Ovary (tissue), 10 donors: ENCODE measurements at regions of chr21 and their contacts with region 1.

Region 1: DNA sequence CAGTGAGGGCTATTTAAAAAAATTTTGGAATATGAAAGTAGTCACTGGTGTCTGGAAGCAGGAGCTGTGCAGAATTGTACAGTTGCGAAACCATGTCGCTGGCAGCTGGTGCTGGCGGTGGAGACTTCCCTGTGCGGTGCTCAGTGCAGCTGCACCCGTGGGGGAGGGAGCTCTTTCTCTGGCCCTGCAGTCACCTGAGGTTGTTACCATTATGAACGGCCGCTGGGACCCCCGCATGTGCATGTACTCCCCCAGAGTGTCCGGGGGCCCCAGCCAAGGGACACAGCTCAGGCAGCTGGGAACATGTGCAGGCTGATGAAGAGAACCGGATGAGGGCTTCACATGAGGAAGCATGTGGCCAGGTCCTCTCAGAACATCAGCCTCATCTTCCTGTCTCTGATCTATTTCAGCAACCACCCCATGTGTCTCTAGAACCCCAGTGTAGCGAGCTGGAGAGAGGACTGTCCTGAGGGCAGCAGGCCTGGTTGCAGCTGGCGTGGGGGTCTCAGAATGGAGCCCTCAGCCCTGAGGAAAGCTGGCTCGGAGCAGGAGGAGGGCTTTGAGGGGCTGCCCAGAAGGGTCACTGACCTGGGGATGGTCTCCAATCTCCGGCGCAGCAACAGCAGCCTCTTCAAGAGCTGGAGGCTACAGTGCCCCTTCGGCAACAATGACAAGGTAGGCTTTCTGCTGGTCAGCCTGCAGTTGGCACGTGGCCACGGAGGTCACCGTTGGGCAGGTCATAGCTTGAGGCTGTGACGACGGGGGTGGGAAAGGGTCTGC is at the start of gene TRPM2:
- DNase-seq: no peak
- H3K4me3 ChIP-seq: no peak within 1 kb of the TSS
- H3K27ac ChIP-seq: no peak within 1 kb of the TSS
- H3K4me1 ChIP-seq: no peaks in the 10 kb centered on the region
- H3K27me3 ChIP-seq: no peaks in the 10 kb centered on the region
- CTCF ChIP-seq: no peak
- EP300 ChIP-seq: no peak
- POLR2A ChIP-seq: no peak
- total RNA-seq, gene TRPM2: 0.48 to 7.0 (median 2.1) TPM

Region 2: DNA sequence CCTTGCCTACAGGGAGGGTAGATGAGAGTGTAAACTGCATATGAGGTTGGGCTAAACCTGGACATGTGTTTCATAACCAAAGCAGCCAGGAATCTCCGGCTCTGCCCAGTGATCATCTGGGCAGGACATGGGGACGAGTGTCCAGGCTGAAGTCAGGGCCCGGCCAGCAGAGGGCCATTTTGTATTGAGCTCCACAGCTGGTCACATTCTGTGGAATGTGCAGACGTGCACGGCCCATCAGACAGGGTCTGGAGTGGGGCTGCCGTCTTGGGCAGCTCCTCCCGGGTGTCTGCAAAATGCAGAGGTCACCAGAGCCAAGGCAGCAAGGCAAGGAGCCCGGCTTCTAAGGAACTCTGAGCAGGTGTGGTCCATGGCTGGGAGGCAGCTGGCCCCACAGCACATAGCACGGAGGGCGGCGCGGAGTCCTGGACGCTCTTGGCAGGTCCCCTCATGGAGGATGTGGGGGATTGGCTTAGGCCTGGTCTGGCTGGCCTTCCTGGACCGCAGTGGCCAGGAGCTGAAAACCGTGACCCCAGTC is 108.2 kb after region 1 on chr21:
- intact Hi-C with region 1: loop called in 1 of 4 experiments (anchors 10 kb)
- DNase-seq: peak in 1 of 5 donors; percentile 8
- H3K4me3 ChIP-seq: no peak overlapping the region
- H3K27ac ChIP-seq: no peak overlapping the region
- H3K4me1 ChIP-seq: peaks cover 5% of the 10 kb centered on the region
- H3K27me3 ChIP-seq: no peaks in the 10 kb centered on the region
- CTCF ChIP-seq: no peak
- EP300 ChIP-seq: no peak
- POLR2A ChIP-seq: no peak

Region 3: GRCh38 chr21:44510508-44511210 is 157.3 kb after region 1 on chr21:
- intact Hi-C with region 1: no loop called
- DNase-seq: peak in 2 of 5 donors; percentile 43 to 46
- H3K4me3 ChIP-seq: no peak overlapping the region
- H3K27ac ChIP-seq: no peak overlapping the region
- H3K4me1 ChIP-seq: peaks cover 1% of the 10 kb centered on the region
- H3K27me3 ChIP-seq: no peaks in the 10 kb centered on the region
- CTCF ChIP-seq: peak in 1 of 3 donors; percentile 19
- EP300 ChIP-seq: no peak
- POLR2A ChIP-seq: no peak

Region 4: GRCh38 chr21:45078877-45079281 is 725.5 kb after region 1 on chr21:
- intact Hi-C with region 1: no loop called
- DNase-seq: no peak
- H3K4me3 ChIP-seq: no peak overlapping the region
- H3K27ac ChIP-seq: no peak overlapping the region
- H3K4me1 ChIP-seq: peaks cover 3% of the 10 kb centered on the region
- H3K27me3 ChIP-seq: no peaks in the 10 kb centered on the region
- CTCF ChIP-seq: no peak
- EP300 ChIP-seq: no peak
- POLR2A ChIP-seq: no peak